ENCODE measurements at regions of chr14 and their contacts with region 1.

Region 1: GRCh38 chr14:71320107-71320733 is 413.0 kb downstream of the PCNX1 start:
- DNase-seq: peak; percentile 98 to 99 (median 98)
- H3K4me3 ChIP-seq: peak within 1 kb of the TSS; percentile 81 to 96 (median 84)
- H3K4me3 Mint-ChIP-seq: peak within 1 kb of the TSS; percentile 97
- H3K27ac ChIP-seq: peak within 1 kb of the TSS; percentile 86 to 92
- H3K27ac Mint-ChIP-seq: peak within 1 kb of the TSS; percentile 87 to 97 (median 94)
- H3K4me1 ChIP-seq: peaks cover 42% of the 10 kb centered on the region in 2 donors
- H3K4me1 Mint-ChIP-seq: peaks cover 40% of the 10 kb centered on the region
- H3K27me3 ChIP-seq: no peaks in the 10 kb centered on the region
- H3K27me3 Mint-ChIP-seq: peaks cover 0 to 1% (median 0%) of the 10 kb centered on the region in 3 donors
- CTCF ChIP-seq: no peak

Region 2: DNA sequence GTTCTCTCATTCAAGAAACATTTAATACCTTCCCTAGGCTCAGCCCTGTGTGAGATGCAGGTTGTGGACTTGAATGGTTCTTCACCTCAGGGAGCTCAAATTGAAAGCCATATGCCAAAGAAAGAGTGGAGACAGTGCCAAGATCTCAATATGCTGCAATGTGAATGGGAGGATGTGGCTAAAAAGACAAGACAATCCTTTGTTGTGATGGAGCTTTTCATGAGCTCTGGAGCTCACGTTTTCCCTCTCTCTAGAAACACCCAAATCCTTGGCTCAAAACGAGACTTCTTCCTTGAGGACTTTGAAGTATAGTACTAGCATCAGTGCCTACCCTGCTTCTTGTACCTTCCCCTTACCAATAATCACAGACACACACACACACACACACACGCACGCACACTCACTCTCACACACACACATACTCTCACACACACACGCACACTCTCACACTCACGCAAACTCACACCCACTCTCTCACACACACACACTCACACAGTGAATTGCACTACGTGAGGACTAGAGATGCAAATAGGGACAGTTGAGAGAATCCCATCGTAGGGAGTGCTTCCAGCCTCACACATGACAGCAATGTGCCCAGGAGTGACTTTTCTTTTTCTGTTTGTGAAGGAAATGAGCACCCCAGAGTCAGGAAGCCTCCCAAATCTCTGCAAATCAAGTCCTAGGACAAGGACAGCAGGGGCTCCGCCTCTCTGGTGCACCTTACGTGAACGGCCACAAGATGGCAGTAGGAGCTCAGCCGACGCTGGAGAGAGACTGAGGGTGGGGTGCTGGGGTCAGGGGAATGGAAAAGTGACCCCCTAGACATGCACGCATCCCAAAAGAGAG is 181.5 kb before region 1 on chr14:
- intact Hi-C with region 1: loop called in 1 of 2 experiments (anchors 10 kb)
- DNase-seq: peak; percentile 38 to 58 (median 56)
- H3K4me3 ChIP-seq: peak overlapping the region in 1 of 3 experiments; percentile 13
- H3K4me3 Mint-ChIP-seq: peak overlapping the region; percentile 18 to 55
- H3K27ac ChIP-seq: no peak overlapping the region
- H3K27ac Mint-ChIP-seq: peak overlapping the region in 2 of 7 donors; percentile 28 to 78
- H3K4me1 ChIP-seq: peaks cover 40 to 49% of the 10 kb centered on the region in 2 donors
- H3K4me1 Mint-ChIP-seq: peaks cover 43% of the 10 kb centered on the region
- H3K27me3 ChIP-seq: no peaks in the 10 kb centered on the region
- H3K27me3 Mint-ChIP-seq: peaks cover 0 to 3% (median 2%) of the 10 kb centered on the region in 3 donors
- CTCF ChIP-seq: peak; percentile 92

Region 3: DNA sequence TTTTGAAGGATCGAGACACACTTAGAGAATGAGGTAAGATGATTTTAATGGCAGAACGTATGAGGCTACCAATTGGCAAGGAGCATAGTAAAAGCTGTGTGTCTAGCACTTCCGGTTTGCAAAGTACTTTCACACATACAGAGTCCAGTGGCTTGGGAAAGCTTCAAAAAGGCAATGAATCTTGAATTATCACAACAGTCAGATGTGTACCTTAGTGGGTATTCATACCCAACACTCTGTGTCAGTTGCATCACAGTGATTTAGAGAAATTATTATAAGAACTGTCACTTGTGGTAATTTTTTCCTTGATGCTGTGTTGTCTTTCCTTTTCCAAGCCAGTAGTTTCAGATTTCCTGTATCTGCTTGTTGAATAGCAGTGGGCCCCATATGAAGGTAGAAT is 11.2 kb after region 1 on chr14:
- intact Hi-C with region 1: no loop called
- DNase-seq: no peak
- H3K4me3 ChIP-seq: no peak overlapping the region
- H3K4me3 Mint-ChIP-seq: no peak overlapping the region
- H3K27ac ChIP-seq: no peak overlapping the region
- H3K27ac Mint-ChIP-seq: no peak overlapping the region
- H3K4me1 ChIP-seq: peaks cover 11 to 30% of the 10 kb centered on the region in 2 donors
- H3K4me1 Mint-ChIP-seq: peaks cover 42% of the 10 kb centered on the region
- H3K27me3 ChIP-seq: no peaks in the 10 kb centered on the region
- H3K27me3 Mint-ChIP-seq: no peaks in the 10 kb centered on the region
- CTCF ChIP-seq: no peak

Region 4: GRCh38 chr14:71355324-71356201 is 35.3 kb after region 1 on chr14:
- intact Hi-C with region 1: loop called in 1 of 2 experiments (anchors 5 kb)
- DNase-seq: peak in 1 of 3 donors; percentile 19
- H3K4me3 ChIP-seq: no peak overlapping the region
- H3K4me3 Mint-ChIP-seq: no peak overlapping the region
- H3K27ac ChIP-seq: peak overlapping the region in 1 of 2 donors; percentile 39
- H3K27ac Mint-ChIP-seq: peak overlapping the region in 4 of 7 donors; percentile 1 to 52 (median 14)
- H3K4me1 ChIP-seq: peaks cover 13 to 20% of the 10 kb centered on the region in 2 donors
- H3K4me1 Mint-ChIP-seq: peaks cover 48% of the 10 kb centered on the region
- H3K27me3 ChIP-seq: no peaks in the 10 kb centered on the region
- H3K27me3 Mint-ChIP-seq: peaks cover 0 to 3% (median 2%) of the 10 kb centered on the region in 3 donors
- CTCF ChIP-seq: no peak

Region 5: DNA sequence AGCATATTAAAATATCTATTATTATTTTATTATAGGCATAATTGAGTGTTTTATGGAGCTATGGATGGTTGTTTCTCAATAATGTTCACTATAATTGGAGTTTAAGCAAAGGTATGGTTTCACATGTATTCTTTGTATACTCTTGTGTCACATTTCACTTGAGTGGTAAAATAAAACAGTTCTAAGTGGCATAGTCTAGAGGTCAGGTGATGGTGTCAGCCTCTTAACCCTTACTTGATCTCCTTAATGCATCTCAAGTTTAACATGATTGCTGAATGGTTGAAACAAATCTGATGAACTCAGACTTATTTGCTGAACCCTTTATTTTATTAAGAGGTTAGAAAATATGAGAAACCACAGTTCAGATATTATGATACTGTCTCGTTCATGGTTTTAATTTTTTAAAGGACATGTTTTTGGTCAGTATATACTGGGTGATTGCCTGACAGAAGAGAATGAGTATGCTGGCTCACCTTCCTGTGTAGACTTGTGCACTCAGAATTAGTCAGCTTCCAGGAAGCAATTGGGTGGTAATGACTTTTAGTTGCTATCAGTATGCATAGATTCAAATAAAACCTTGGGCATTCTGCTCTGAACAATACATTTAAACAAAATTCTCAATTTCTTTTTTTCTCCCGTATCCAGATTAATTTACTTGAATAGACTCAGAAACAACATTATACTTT is 51.6 kb after region 1 on chr14:
- intact Hi-C with region 1: loop called in 1 of 2 experiments (anchors 2 kb)
- DNase-seq: peak; percentile 68 to 82 (median 82)
- H3K4me3 ChIP-seq: peak overlapping the region in 1 of 3 experiments; percentile 26
- H3K4me3 Mint-ChIP-seq: peak overlapping the region in 1 of 2 donors; percentile 72
- H3K27ac ChIP-seq: peak overlapping the region in 1 of 2 donors; percentile 90
- H3K27ac Mint-ChIP-seq: peak overlapping the region; percentile 91 to 96 (median 94)
- H3K4me1 ChIP-seq: peaks cover 16 to 17% of the 10 kb centered on the region in 2 donors
- H3K4me1 Mint-ChIP-seq: peaks cover 22% of the 10 kb centered on the region
- H3K27me3 ChIP-seq: no peaks in the 10 kb centered on the region
- H3K27me3 Mint-ChIP-seq: no peaks in the 10 kb centered on the region
- CTCF ChIP-seq: no peak

Region 6: DNA sequence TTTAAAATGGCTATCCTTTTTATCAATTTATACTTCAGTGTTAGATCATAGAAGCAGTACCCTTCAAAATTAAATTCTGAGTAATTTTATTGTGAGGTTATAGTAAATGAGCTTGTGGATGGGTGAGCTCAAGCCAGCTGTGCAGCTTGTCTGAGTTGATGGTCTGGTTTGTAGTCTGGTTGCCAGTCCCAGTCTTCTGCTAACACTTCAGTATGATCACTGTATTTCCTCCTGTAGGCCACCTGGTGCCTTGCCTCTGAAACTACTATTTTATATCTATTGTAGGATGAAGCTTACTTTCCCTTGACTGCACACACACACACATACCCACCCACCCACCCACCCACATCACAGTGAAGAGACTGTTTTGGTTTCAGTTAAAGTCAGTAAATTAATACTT is 83.4 kb after region 1 on chr14:
- intact Hi-C with region 1: loop called (anchors 2 to 5 kb)
- DNase-seq: peak; percentile 28 to 51 (median 45)
- H3K4me3 ChIP-seq: no peak overlapping the region
- H3K4me3 Mint-ChIP-seq: no peak overlapping the region
- H3K27ac ChIP-seq: no peak overlapping the region
- H3K27ac Mint-ChIP-seq: peak overlapping the region in 6 of 7 donors; percentile 21 to 74 (median 46)
- H3K4me1 ChIP-seq: peaks cover 24 to 34% of the 10 kb centered on the region in 2 donors
- H3K4me1 Mint-ChIP-seq: peaks cover 31% of the 10 kb centered on the region
- H3K27me3 ChIP-seq: no peaks in the 10 kb centered on the region
- H3K27me3 Mint-ChIP-seq: no peaks in the 10 kb centered on the region
- CTCF ChIP-seq: peak; percentile 35

Region 7: GRCh38 chr14:71478542-71478941 is 158.3 kb after region 1 on chr14:
- intact Hi-C with region 1: loop called in 1 of 2 experiments (anchors 10 kb)
- DNase-seq: peak; percentile 73 to 90 (median 84)
- H3K4me3 ChIP-seq: peak overlapping the region in 1 of 3 experiments; percentile 42
- H3K4me3 Mint-ChIP-seq: peak overlapping the region in 1 of 2 donors; percentile 73
- H3K27ac ChIP-seq: peak overlapping the region; percentile 38 to 93
- H3K27ac Mint-ChIP-seq: peak overlapping the region; percentile 93 to 99 (median 96)
- H3K4me1 ChIP-seq: peaks cover 22 to 36% of the 10 kb centered on the region in 2 donors
- H3K4me1 Mint-ChIP-seq: peaks cover 31% of the 10 kb centered on the region
- H3K27me3 ChIP-seq: no peaks in the 10 kb centered on the region
- H3K27me3 Mint-ChIP-seq: no peaks in the 10 kb centered on the region
- CTCF ChIP-seq: no peak

Measured in CD14-positive monocyte (primary cell).